Heart left ventricle (tissue), 16 donors: ENCODE measurements at regions of chr3 and their contacts with region 1.

Region 1: DNA sequence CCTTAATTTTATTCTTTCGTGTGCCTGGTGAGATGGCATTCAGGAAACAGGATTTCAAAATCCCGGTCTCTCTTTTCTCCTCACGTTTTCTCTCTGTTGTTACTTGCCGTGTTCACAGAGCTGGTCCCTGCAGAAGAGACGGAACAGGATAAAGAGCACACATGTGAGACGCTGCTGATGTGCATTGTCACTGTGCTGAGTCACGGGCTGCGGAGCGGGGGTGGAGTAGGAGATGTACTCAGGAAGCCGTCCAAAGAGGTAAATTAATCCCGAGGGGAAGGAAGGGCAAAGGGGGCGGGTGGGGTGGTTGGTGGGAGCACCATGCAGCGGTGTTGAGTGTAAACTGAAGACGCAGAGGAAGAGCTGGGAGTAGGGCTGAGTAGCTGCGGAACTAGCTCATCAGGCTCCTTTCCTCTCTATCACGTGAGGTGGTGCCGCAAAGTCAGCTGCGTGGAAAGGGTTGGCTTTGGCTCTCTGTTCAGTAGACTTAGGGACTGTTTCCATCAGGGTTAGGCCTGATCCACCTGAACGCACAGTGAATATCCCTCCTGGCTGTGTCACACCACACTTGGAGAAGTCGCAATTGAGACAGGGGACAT is 164.8 kb upstream of the BHLHE40 start:
- DNase-seq: peak; percentile 31 to 72 (median 64)
- ATAC-seq: peak; percentile 51 to 90 (median 76)
- H3K4me3 ChIP-seq: peak overlapping the region in 1 of 12 donors; percentile 22
- H3K27ac ChIP-seq: peak overlapping the region in 8 of 12 donors; percentile 5 to 69 (median 41)
- H3K4me1 ChIP-seq: peaks cover 0 to 12% (median 0%) of the 10 kb centered on the region in 12 donors
- H3K27me3 ChIP-seq: no peaks in the 10 kb centered on the region
- CTCF ChIP-seq: no peak
- POLR2A ChIP-seq: no peak

Region 2: GRCh38 chr3:4751502-4752101 is 62.8 kb before region 1 on chr3:
- intact Hi-C with region 1: loop called in 1 of 10 experiments (anchors 5 kb)
- DNase-seq: no peak
- ATAC-seq: peak; percentile 58 to 80 (median 72)
- H3K4me3 ChIP-seq: peak overlapping the region in 5 of 12 donors; percentile 3 to 43 (median 12)
- H3K27ac ChIP-seq: peak overlapping the region; percentile 15 to 90 (median 80)
- H3K4me1 ChIP-seq: peaks cover 7 to 70% (median 35%) of the 10 kb centered on the region in 12 donors
- H3K27me3 ChIP-seq: no peaks in the 10 kb centered on the region
- CTCF ChIP-seq: no peak
- POLR2A ChIP-seq: no peak

Region 3: DNA sequence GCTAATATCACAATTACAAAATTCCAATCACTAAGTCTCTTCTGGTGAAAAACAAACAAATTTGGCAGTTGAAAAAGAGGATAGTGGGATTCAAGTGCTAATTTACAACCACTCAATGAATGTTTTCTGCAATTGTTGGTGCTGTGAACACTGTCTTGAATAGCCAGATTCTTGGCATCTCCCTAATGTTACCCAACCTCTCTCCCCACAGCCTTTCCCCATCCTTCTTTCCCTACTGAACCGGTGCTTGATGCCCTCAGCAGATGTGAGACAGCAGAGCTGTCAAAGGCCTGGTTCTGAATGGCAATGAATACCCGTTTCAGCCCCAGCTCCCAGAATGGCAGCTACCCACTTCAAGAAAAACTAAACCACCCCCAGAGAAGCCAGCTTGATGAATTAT is 142.3 kb after region 1 on chr3:
- intact Hi-C with region 1: no loop called
- DNase-seq: no peak
- ATAC-seq: no peak
- H3K4me3 ChIP-seq: no peak overlapping the region
- H3K27ac ChIP-seq: no peak overlapping the region
- H3K4me1 ChIP-seq: no peaks in the 10 kb centered on the region
- H3K27me3 ChIP-seq: no peaks in the 10 kb centered on the region
- CTCF ChIP-seq: no peak
- POLR2A ChIP-seq: no peak